MCF 10A (cell line): ENCODE measurements at regions of chr10 and their contacts with region 1.

Region 1: DNA sequence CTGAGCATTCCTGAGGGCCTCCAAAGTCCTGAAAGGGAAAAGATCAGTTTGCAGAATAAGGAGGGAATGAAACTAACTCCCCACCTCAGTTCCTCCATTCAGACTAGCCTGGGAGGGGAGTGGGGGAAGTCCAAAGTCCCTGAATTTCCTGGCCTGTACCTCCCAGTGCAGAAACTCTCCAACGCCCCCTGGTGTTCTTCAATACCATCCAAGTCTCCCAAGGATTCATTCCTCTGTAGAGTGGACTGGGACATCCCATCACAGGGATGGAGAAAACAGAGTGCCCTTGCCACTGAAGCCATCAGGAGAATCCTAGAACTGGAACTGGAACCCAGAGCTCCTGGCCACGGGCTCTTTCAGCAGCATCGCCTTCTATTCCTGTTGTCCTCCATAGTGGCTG is 1.6 kb upstream of the COL13A1 start:
- DNase-seq: peak; percentile 75
- H3K4me3 Mint-ChIP-seq: no peak overlapping the region
- H3K27ac Mint-ChIP-seq: no peak overlapping the region
- H3K4me1 Mint-ChIP-seq: peaks cover 18% of the 10 kb centered on the region
- H3K27me3 Mint-ChIP-seq: no peaks in the 10 kb centered on the region
- CTCF ChIP-seq: peak; percentile 56

Region 2: DNA sequence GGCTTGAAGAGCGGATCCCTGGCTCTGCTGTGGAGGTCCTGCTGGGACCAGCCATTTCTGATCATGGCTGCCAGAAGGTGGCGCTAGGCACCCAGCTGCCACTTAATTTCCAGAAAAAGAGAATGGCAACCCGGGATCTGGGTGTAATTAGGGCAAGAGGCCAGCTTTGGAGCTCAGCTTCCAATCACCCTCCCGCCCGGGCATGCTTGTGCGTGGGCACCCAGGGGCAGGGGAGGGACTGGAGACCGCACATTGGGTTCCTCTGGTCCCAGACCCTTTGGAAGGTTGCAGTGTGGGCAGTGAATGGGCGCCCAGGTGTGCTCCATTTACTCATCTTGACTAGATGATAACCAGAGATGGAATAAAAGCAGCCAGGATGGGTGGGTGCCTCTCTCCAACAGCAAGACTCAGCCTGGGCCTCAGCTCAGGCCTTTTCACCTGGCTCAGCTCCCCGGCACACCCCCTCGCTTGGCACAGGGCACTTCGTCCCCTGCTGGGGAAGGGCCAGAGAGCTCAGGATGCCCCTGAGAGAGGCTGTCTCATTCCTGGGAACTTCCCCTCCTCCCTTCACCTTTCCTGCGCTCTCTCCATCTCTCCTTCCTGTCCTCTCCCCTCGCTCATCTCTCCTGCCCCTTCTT is 155.3 kb before region 1 on chr10:
- CTCF ChIA-PET with region 1: interaction called, 10 read pairs
- POLR2A ChIA-PET with region 1: no interaction called
- intact Hi-C with region 1: loop called (anchors 1 kb)
- DNase-seq: peak; percentile 73
- H3K4me3 Mint-ChIP-seq: no peak overlapping the region
- H3K27ac Mint-ChIP-seq: no peak overlapping the region
- H3K4me1 Mint-ChIP-seq: peaks cover 15% of the 10 kb centered on the region
- H3K27me3 Mint-ChIP-seq: no peaks in the 10 kb centered on the region
- CTCF ChIP-seq: peak; percentile 88

Region 3: DNA sequence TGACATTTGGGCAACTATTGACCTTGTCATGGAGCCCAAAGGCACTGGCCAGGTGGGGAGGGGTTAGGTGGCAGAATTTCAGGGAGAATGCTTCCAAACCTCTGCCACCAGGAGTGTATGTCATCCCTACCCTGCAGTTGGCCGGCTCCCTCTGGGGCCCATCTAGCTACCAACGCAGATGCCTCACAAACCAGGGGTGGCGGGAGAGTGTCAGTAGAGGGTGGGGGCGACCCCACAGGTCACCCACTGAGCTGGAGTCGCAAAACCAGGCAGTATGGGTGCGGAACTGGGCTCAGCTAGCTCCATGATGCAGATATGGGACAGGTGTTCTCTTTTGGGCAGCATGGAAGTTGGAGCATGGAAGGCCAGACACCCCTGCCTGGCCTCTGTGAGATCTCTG is 118.7 kb before region 1 on chr10:
- CTCF ChIA-PET with region 1: no interaction called
- POLR2A ChIA-PET with region 1: no interaction called
- intact Hi-C with region 1: no loop called
- DNase-seq: no peak
- H3K4me3 Mint-ChIP-seq: no peak overlapping the region
- H3K27ac Mint-ChIP-seq: no peak overlapping the region
- H3K4me1 Mint-ChIP-seq: peaks cover 5% of the 10 kb centered on the region
- H3K27me3 Mint-ChIP-seq: peaks cover 17% of the 10 kb centered on the region
- CTCF ChIP-seq: no peak

Region 4: GRCh38 chr10:69696073-69696731 is 103.9 kb before region 1 on chr10:
- CTCF ChIA-PET with region 1: interaction called, 7 read pairs
- POLR2A ChIA-PET with region 1: no interaction called
- intact Hi-C with region 1: loop called (anchors 1 kb)
- DNase-seq: peak; percentile 70
- H3K4me3 Mint-ChIP-seq: no peak overlapping the region
- H3K27ac Mint-ChIP-seq: no peak overlapping the region
- H3K4me1 Mint-ChIP-seq: no peaks in the 10 kb centered on the region
- H3K27me3 Mint-ChIP-seq: peaks cover 24% of the 10 kb centered on the region
- CTCF ChIP-seq: peak; percentile 69

Region 5: DNA sequence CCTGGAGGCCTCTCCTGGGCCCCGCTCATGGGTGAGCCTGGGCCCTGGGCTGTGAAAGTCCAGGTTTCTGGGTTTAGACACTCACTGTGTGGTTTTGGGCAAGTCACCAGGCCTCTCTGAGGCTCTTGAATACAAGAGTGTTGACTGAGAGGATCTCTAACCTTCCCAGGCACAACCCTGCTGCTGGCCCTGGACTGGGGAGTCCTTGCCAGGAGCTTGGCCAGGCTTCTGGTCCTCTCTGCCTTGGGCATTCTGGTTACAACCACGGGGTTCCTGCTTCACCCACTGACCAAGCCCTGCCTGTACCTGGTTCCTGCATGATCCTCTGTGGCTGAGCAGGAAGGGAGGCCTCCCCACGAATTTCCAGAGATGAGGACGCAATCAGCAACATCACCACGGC is 62.0 kb before region 1 on chr10:
- CTCF ChIA-PET with region 1: no interaction called
- POLR2A ChIA-PET with region 1: no interaction called
- intact Hi-C with region 1: no loop called
- DNase-seq: no peak
- H3K4me3 Mint-ChIP-seq: no peak overlapping the region
- H3K27ac Mint-ChIP-seq: no peak overlapping the region
- H3K4me1 Mint-ChIP-seq: no peaks in the 10 kb centered on the region
- H3K27me3 Mint-ChIP-seq: no peaks in the 10 kb centered on the region
- CTCF ChIP-seq: no peak

Region 6: DNA sequence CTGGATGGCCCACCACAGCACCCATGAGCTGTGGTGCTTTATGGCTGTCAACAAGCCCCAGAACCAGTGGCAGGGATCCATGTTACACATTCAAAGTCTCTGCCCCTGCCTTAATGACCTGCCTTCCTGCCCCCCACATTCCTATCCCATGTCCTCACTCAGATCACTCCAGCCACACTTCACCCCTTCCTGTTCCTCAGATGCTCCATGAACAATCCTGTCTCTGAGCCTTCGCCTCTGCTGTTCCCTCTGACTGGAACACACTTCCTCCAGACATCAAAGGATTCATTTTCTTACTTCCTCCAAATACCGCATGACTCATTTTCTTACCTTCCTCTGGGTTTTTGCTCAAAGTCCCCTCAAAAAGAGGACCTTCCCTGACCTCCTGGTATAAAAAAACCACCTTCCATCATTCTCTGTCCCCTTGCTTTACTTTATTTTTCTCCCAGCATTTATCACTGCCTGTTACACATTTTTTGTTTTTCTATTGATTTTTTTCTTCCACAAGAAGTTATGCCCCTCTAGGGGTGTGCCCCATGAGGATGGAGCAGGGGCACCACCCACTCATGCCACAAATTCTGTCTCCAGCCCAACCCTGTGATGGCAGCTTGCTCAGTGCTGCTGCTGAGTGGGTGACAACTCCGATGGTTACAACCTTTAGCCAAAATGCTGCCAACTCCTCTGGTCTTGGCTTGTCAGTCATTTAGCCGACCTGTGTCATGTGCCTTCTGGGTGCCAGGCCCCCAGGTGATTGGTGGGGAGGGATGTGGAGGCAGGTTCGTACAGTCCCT is 19.8 kb after region 1 on chr10:
- CTCF ChIA-PET with region 1: no interaction called
- POLR2A ChIA-PET with region 1: no interaction called
- intact Hi-C with region 1: no loop called
- DNase-seq: no peak
- H3K4me3 Mint-ChIP-seq: no peak overlapping the region
- H3K27ac Mint-ChIP-seq: no peak overlapping the region
- H3K4me1 Mint-ChIP-seq: no peaks in the 10 kb centered on the region
- H3K27me3 Mint-ChIP-seq: no peaks in the 10 kb centered on the region
- CTCF ChIP-seq: no peak